ENCODE measurements at regions of chr19 and their contacts with region 1.

Region 1: GRCh38 chr19:44164673-44165512 is at the start of gene ZNF226:
- DNase-seq: peak; percentile 99
- ATAC-seq: peak; percentile 99
- H3K4me3 ChIP-seq: peak within 1 kb of the TSS; percentile 79 to 96 (median 80)
- H3K27ac ChIP-seq: peak within 1 kb of the TSS; percentile 69
- H3K4me1 ChIP-seq: peaks cover 21% of the 10 kb centered on the region
- H3K27me3 ChIP-seq: no peaks in the 10 kb centered on the region
- CTCF ChIP-seq: no peak
- EP300 ChIP-seq: no peak
- POLR2A ChIP-seq: peak; percentile 75 to 85
- RAD21 ChIP-seq: no peak
- total RNA-seq, gene ZNF226: 16.0 and 19.2 TPM in 2 replicates

Region 2: GRCh38 chr19:43934985-43935708 is 229.7 kb before region 1 on chr19 and contains the start of gene ZNF45:
- CTCF ChIA-PET with region 1: no interaction called
- POLR2A ChIA-PET with region 1: interaction called, 12 read pairs
- in situ Hi-C with region 1: no loop called
- intact Hi-C with region 1: no loop called
- DNase-seq: peak; percentile 88
- ATAC-seq: peak; percentile 98
- H3K4me3 ChIP-seq: peak within 1 kb of the TSS; percentile 81 to 94 (median 93)
- H3K27ac ChIP-seq: peak within 1 kb of the TSS; percentile 82
- H3K4me1 ChIP-seq: peaks cover 7% of the 10 kb centered on the region; the same call in 1 of the 2 replicates
- H3K27me3 ChIP-seq: no peaks in the 10 kb centered on the region
- CTCF ChIP-seq: no peak
- EP300 ChIP-seq: no peak
- POLR2A ChIP-seq: peak; percentile 72 to 74
- RAD21 ChIP-seq: 0 out of 2 replicates have a peak, but pooled peaks have one; percentile 3
- total RNA-seq, gene ZNF45: 11.3 and 13.0 TPM in 2 replicates

Region 3: DNA sequence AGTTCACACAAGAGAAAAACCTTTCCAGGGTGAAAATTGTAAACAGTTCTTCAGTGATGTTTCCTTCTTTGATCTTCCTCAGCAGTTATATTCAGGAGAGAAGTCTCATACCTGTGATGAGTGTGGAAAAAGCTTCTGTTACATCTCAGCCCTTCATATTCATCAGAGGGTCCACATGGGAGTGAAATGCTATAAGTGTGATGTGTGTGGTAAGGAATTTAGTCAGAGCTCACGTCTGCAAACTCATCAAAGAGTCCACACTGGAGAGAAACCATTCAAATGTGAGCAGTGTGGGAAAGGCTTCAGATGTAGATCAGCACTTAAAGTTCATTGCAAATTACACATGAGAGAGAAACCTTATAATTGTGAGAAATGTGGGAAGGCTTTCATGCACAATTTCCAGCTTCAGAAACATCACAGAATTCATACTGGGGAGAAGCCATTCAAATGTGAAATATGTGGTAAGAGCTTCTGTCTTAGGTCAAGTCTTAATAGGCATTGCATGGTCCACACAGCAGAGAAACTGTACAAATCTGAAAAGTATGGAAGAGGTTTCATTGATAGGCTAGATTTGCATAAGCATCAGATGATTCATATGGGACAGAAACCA is 132.8 kb before region 1 on chr19:
- CTCF ChIA-PET with region 1: no interaction called
- POLR2A ChIA-PET with region 1: no interaction called
- in situ Hi-C with region 1: no loop called
- intact Hi-C with region 1: no loop called
- DNase-seq: no peak
- ATAC-seq: no peak
- H3K4me3 ChIP-seq: no peak overlapping the region
- H3K27ac ChIP-seq: no peak overlapping the region
- H3K4me1 ChIP-seq: no peaks in the 10 kb centered on the region
- H3K27me3 ChIP-seq: no peaks in the 10 kb centered on the region
- CTCF ChIP-seq: no peak
- EP300 ChIP-seq: no peak
- POLR2A ChIP-seq: no peak
- RAD21 ChIP-seq: no peak

Region 4: DNA sequence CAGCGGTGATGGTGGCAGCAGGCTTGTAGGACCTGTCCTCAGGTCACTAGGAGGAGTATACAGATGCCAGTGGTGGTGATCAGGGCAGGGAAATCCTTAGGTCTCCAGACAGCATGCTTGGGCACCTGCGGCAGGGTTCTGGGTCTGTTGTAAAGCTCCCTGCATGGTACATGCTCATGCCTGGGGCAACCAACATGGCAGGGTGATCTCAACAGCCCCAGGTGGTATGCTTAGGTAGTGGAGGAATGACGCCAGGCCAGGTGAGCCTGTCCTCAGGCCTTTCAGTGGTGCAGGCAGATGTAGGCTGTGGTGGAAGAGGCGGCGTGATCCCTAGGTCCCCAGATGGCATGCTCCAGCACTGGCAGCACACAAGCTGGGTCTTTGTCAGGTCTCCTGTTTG is 81.0 kb before region 1 on chr19:
- CTCF ChIA-PET with region 1: no interaction called
- POLR2A ChIA-PET with region 1: no interaction called
- in situ Hi-C with region 1: no loop called
- intact Hi-C with region 1: no loop called
- DNase-seq: no peak
- ATAC-seq: no peak
- H3K4me3 ChIP-seq: no peak overlapping the region
- H3K27ac ChIP-seq: no peak overlapping the region
- H3K4me1 ChIP-seq: no peaks in the 10 kb centered on the region
- H3K27me3 ChIP-seq: no peaks in the 10 kb centered on the region
- CTCF ChIP-seq: no peak
- EP300 ChIP-seq: no peak
- POLR2A ChIP-seq: no peak
- RAD21 ChIP-seq: no peak

Region 5: GRCh38 chr19:44093931-44094765 is 70.7 kb before region 1 on chr19 and contains the start of gene ZNF224:
- CTCF ChIA-PET with region 1: no interaction called
- POLR2A ChIA-PET with region 1: interaction called, 18 read pairs
- in situ Hi-C with region 1: no loop called
- intact Hi-C with region 1: loop called (anchors 1 kb)
- DNase-seq: peak; percentile 88
- ATAC-seq: peak; percentile 99
- H3K4me3 ChIP-seq: peak within 1 kb of the TSS; percentile 87 to 95 (median 87)
- H3K27ac ChIP-seq: peak within 1 kb of the TSS; percentile 65
- H3K4me1 ChIP-seq: peaks cover 6% of the 10 kb centered on the region
- H3K27me3 ChIP-seq: no peaks in the 10 kb centered on the region; a peak in 1 of 5 replicates
- CTCF ChIP-seq: no peak
- EP300 ChIP-seq: 0 out of 4 replicates have a peak, but pooled peaks of 1 of the 2 experiments have one; percentile 16
- POLR2A ChIP-seq: peak; percentile 62 to 80
- RAD21 ChIP-seq: no peak
- total RNA-seq, gene ZNF224: 14.0 and 16.1 TPM in 2 replicates

Region 6: DNA sequence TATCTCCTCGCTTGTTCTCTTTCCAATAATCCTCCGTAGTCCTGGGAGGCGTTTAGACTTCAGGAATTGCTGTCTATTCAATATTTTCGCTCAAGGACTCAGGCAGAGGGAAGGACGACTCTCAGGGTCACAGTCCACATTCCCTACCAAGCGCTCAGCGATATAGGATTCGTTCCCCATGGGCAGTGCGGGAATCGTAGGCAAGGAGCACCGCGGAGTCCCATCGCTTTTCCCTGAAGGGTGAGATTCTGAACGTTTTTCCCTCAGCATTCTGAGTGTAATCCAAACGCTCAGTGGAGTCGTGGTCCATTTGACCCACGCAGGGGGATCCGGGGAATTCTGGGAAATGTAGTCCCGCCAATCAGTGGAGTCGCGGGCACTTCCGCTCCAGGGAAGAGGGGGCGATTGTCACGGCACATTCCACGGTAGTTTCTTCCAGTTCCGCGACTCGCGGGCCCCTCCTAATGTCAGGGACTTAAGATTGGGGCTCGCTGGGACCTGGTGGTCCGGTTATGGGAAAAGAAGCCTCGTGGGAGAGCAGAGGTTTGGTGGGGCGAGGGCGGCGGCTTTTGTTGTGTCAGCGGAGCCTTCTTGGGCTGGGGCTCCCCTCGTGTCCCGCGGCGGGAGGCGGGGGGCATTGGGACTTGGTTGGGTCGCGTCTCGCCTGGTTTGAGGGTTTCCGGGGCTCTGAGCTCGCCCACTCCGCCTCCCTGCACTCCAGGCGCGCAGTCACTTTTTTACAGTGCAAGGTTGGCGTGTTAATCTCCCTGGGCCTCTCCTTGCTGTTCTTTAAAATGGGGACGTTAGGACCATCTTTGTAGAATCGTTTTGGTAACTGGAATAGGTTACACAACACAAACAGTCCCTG is 23.5 kb before region 1 on chr19 and contains the start of gene ZNF234:
- CTCF ChIA-PET with region 1: no interaction called
- POLR2A ChIA-PET with region 1: interaction called, 9 read pairs
- in situ Hi-C with region 1: no loop called
- intact Hi-C with region 1: loop called (anchors 1 kb)
- DNase-seq: peak; percentile 73
- ATAC-seq: peak; percentile 98
- H3K4me3 ChIP-seq: peak within 1 kb of the TSS; percentile 79 to 89 (median 82)
- H3K27ac ChIP-seq: peak within 1 kb of the TSS; percentile 75
- H3K4me1 ChIP-seq: peaks cover 4% of the 10 kb centered on the region; the same call in 1 of the 2 replicates
- H3K27me3 ChIP-seq: no peaks in the 10 kb centered on the region
- CTCF ChIP-seq: peak; percentile 36
- EP300 ChIP-seq: no peak
- POLR2A ChIP-seq: peak; percentile 58 to 83; a peak in 3 of 4 replicates
- RAD21 ChIP-seq: no peak
- total RNA-seq, gene ZNF234: 11.2 and 11.7 TPM in 2 replicates

Region 7: DNA sequence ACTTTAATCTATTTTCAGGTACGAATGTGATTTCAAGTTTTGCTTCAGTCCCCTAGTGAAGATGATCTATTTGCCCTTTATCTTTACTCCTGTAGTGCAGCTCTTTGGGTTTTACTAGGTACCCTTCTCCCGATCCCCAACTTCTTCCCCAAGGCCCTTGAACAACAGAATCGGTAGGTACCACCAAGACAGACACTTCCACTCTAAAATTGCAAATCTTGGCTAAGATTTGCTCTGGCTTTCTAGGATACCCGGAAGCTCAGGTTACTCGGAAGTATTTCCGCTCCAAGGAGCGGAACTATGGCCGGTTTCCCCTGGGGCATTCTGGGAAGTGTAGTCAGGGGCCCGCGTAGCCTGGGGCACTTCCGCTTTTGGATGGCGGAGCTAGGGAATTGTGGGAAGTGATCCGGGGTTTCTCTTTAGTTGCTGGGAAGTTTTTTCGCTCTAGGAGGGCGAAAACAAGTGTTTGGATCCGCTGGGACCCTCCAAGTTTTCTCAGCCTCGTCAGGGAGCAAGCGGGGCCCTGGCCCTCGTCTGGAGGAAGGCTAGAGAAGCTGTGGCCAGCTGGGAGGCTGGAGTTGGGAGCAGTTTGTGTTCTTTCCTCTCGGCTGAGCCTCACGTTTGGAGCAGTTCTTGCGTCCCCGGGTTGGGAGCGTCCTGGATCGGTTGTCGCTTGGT is 42.4 kb after region 1 on chr19:
- CTCF ChIA-PET with region 1: no interaction called
- POLR2A ChIA-PET with region 1: interaction called, 36 read pairs
- in situ Hi-C with region 1: no loop called
- intact Hi-C with region 1: no loop called
- DNase-seq: peak; percentile 94
- ATAC-seq: peak; percentile 99
- H3K4me3 ChIP-seq: peak overlapping the region; percentile 80 to 94 (median 88)
- H3K27ac ChIP-seq: peak overlapping the region; percentile 66
- H3K4me1 ChIP-seq: no peaks in the 10 kb centered on the region
- H3K27me3 ChIP-seq: peaks cover 0 to 3% of the 10 kb centered on the region in 2 experiments; a peak in 1 of 5 replicates
- CTCF ChIP-seq: no peak
- EP300 ChIP-seq: peak in 1 of 2 experiments; percentile 17; a peak in 1 of 4 replicates
- POLR2A ChIP-seq: peak; percentile 49 to 68; a peak in 3 of 4 replicates
- RAD21 ChIP-seq: no peak

Region 8: DNA sequence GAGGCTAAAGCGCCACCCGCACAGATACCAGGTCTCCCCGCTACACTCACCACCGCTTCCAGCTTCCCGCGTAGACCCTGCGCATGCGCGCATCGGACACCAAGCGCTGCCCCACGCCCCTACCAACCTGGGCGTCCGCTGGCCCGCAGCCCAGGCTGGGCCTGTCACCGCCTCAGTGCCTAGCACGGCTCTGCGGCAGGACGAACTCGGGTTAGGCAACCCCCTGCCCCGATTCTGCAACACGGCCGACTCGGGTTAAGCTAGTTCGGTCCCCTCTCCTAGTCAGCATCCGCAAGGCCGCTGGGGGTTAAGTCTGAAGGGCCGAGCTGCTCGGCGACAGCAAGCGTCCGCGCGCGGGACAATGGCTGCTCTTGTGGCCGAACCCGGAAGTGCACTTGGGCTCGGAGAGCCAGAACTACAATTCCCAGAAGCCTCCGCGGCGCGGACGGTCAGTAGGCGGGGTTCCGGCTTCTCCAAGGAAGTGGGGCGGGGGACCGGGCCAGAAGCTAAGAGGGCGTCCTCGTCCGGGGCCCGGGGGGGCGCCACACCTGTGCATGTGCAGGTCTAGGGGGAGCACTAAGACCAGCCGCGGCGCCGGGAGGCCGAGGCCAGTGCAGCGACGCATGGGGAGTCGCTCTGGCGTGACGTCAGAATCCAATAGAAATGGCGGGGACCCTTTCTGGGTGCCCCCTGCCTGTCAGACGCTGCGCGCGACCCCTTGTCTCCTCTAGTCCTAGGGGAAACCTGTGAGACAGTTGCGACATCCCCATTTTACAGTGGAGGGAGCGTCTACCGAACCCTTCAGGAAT is 335.5 kb after region 1 on chr19 and contains the start of gene ZNF180:
- CTCF ChIA-PET with region 1: no interaction called
- POLR2A ChIA-PET with region 1: interaction called, 15 read pairs
- in situ Hi-C with region 1: no loop called
- intact Hi-C with region 1: no loop called
- DNase-seq: peak; percentile 93
- ATAC-seq: peak; percentile 93
- H3K4me3 ChIP-seq: peak within 1 kb of the TSS; percentile 87 to 98 (median 94)
- H3K27ac ChIP-seq: peak within 1 kb of the TSS; percentile 80
- H3K4me1 ChIP-seq: peaks cover 20% of the 10 kb centered on the region
- H3K27me3 ChIP-seq: no peaks in the 10 kb centered on the region; a peak in 1 of 5 replicates
- CTCF ChIP-seq: peak; percentile 66
- EP300 ChIP-seq: no peak
- POLR2A ChIP-seq: peak; percentile 76 to 77
- RAD21 ChIP-seq: peak; percentile 44
- total RNA-seq, gene ZNF180: 9.3 and 13.4 TPM in 2 replicates

Measured in HepG2 (cell line).